Activated T-helper 2 cell treated with anti-CD3 and anti-CD28 coated beads, Interferon-gamma antibody, Interleukin-2, Interleukin-4, amounts not matched to agents 10 μg/mL and 5 μg/mL and 100 μg/mL, durations not matched to agents 14 hours and 24 hours and 36 hours (primary cell): ENCODE measurements at regions of chr16 and their contacts with region 1.

Region 1: GRCh38 chr16:19113453-19114351 is at the start of gene ITPRIPL2:
- DNase-seq: peak; percentile 43
- H3K4me3 Mint-ChIP-seq: peak within 1 kb of the TSS; percentile 83
- H3K27ac Mint-ChIP-seq: peak within 1 kb of the TSS; percentile 88
- H3K4me1 Mint-ChIP-seq: peaks cover 39% of the 10 kb centered on the region
- H3K27me3 Mint-ChIP-seq: no peaks in the 10 kb centered on the region
- total RNA-seq, gene ITPRIPL2: 44.4 and 48.0 TPM in 2 replicates

Region 2: GRCh38 chr16:18789850-18790724 is 323.6 kb before region 1 on chr16 and contains the start of gene RPS15A:
- intact Hi-C with region 1: loop called (anchors 5 kb)
- DNase-seq: peak; percentile 93
- H3K4me3 Mint-ChIP-seq: peak within 1 kb of the TSS; percentile 92
- H3K27ac Mint-ChIP-seq: peak within 1 kb of the TSS; percentile 89
- H3K4me1 Mint-ChIP-seq: peaks cover 46% of the 10 kb centered on the region
- H3K27me3 Mint-ChIP-seq: no peaks in the 10 kb centered on the region
- total RNA-seq, gene RPS15A: 1,903 and 1,963 TPM in 2 replicates

Region 3: DNA sequence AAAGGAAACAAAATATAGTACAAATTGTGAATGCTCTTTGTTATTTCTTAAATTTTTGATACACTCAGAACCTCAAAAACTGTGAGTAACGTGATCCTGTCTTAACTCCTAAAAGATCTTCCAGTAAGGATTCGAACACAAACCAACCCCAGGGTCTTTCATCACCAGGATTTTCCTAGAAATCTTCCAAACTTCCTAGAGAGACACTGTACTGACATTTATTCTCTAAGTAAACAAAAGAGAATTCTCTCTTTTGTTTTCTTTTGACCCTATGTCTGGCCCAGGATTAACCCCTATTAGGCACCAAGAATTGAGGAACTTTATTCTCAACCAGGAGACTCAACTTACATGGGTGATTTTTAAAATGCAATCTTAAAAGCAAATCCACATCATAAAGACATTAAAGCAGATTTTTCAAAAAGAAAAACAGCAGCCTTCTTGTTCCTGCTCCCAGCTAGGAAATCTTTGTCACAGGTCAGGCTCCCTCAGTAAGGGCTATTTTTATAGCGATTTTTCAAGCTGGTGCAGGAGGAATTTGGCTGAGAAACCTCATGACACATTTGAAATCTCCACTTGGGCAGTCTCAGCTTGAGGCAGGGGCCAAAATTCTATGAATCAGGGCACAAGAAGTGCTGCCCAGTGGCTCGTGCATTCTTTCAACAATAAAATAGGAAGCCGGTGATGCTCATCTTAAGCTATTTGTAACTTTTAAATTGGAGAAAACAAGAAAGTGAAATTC is 181.3 kb before region 1 on chr16:
- intact Hi-C with region 1: loop called (anchors 10 kb)
- DNase-seq: no peak
- H3K4me3 Mint-ChIP-seq: no peak overlapping the region
- H3K27ac Mint-ChIP-seq: no peak overlapping the region
- H3K4me1 Mint-ChIP-seq: peaks cover 13% of the 10 kb centered on the region
- H3K27me3 Mint-ChIP-seq: peaks cover under 1% of the 10 kb centered on the region

Region 4: GRCh38 chr16:19067349-19068236 is 46.1 kb before region 1 on chr16 and contains the start of gene COQ7:
- intact Hi-C with region 1: loop called (anchors 5 kb)
- DNase-seq: peak; percentile 98
- H3K4me3 Mint-ChIP-seq: peak within 1 kb of the TSS; percentile 88
- H3K27ac Mint-ChIP-seq: peak within 1 kb of the TSS; percentile 88
- H3K4me1 Mint-ChIP-seq: peaks cover 5% of the 10 kb centered on the region
- H3K27me3 Mint-ChIP-seq: no peaks in the 10 kb centered on the region
- total RNA-seq, gene COQ7: 19.5 and 19.7 TPM in 2 replicates

Region 5: GRCh38 chr16:19086322-19087199 is 27.1 kb before region 1 on chr16:
- intact Hi-C with region 1: loop called (anchors 2 kb)
- DNase-seq: peak; percentile 72
- H3K4me3 Mint-ChIP-seq: peak overlapping the region; percentile 64
- H3K27ac Mint-ChIP-seq: no peak overlapping the region
- H3K4me1 Mint-ChIP-seq: peaks cover 6% of the 10 kb centered on the region
- H3K27me3 Mint-ChIP-seq: peaks cover 12% of the 10 kb centered on the region

Region 6: GRCh38 chr16:19130852-19131810 is 17.4 kb after region 1 on chr16:
- intact Hi-C with region 1: loop called (anchors 2 kb)
- DNase-seq: no peak
- H3K4me3 Mint-ChIP-seq: peak overlapping the region; percentile 27
- H3K27ac Mint-ChIP-seq: peak overlapping the region; percentile 74
- H3K4me1 Mint-ChIP-seq: peaks cover 47% of the 10 kb centered on the region
- H3K27me3 Mint-ChIP-seq: no peaks in the 10 kb centered on the region